Ovary (tissue), 10 donors: ENCODE measurements at regions of chr2 and their contacts with region 1.

Region 1: GRCh38 chr2:162221064-162221463 is 22.2 kb downstream of the FAP start:
- DNase-seq: peak; percentile 21 to 60 (median 46)
- H3K4me3 ChIP-seq: no peak overlapping the region
- H3K27ac ChIP-seq: no peak overlapping the region
- H3K4me1 ChIP-seq: no peaks in the 10 kb centered on the region
- H3K27me3 ChIP-seq: no peaks in the 10 kb centered on the region
- CTCF ChIP-seq: peak in 2 of 3 donors; percentile 37 to 50
- EP300 ChIP-seq: no peak
- POLR2A ChIP-seq: no peak

Region 2: DNA sequence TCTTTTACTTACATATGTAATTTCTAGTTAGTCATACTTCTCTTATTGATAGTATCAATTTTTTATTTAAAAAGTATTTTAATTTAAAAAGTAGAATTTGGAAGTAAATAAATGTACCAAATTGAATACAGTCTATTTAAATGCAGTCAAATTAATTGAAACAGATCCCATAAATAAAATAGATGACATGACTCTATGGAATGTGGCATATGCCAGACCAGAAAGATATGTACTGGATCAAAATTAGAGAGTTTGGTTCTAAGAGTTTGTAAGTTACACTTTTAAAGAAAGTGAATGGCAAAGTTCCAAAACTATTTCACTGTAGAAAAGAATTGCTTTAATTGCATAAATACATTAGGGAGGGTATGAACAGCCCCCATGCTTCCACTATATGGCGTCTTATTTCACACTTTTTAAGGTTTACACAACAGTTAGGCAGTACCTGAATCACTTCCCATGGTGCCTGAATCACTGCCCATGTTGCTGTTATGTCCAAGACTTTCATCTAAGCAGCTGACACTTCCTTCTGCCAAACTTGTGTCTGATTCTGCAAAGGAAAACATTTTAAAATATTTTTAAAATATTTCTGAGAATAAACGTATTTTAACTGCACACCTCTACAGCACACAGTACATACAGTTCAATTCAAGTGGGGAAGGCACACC is 72.2 kb after region 1 on chr2:
- intact Hi-C with region 1: loop called in 1 of 4 experiments (anchors 5 kb)
- DNase-seq: no peak
- H3K4me3 ChIP-seq: no peak overlapping the region
- H3K27ac ChIP-seq: no peak overlapping the region
- H3K4me1 ChIP-seq: no peaks in the 10 kb centered on the region
- H3K27me3 ChIP-seq: no peaks in the 10 kb centered on the region
- CTCF ChIP-seq: no peak
- EP300 ChIP-seq: no peak
- POLR2A ChIP-seq: no peak

Region 3: DNA sequence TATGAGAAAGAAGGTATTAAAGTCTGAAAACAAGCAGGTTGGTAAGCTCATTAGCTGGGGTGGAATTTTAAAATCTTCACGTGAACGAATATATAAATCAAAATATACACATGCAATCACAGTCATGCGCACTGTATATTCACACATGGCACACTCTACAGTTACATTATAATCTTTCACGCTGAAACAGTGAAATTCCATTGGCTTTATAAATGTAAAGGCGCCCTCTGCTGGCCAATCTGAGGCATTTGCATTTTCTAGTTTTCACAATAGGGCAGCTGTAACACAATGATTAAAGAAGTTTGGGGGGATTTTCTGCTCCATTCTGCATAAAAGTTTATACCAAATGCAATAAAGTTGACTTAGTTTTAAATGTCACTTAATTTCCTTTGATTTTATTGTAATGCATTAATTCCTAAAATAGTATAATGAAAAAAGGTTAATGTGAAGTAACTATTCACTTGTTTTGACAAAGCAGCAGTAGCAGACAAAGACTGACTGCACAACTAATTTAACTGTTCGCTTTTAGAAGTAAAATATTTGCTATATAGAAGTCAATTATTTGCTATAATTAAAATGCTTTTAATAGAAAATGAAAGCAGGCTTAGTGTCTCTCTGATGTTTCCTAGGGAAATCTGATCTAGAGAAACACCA is 80.2 kb after region 1 on chr2:
- intact Hi-C with region 1: loop called in 1 of 4 experiments (anchors 2 kb)
- DNase-seq: peak in 3 of 5 donors; percentile 35 to 53 (median 39)
- H3K4me3 ChIP-seq: no peak overlapping the region
- H3K27ac ChIP-seq: no peak overlapping the region
- H3K4me1 ChIP-seq: no peaks in the 10 kb centered on the region
- H3K27me3 ChIP-seq: no peaks in the 10 kb centered on the region
- CTCF ChIP-seq: peak; percentile 52 to 69 (median 66)
- EP300 ChIP-seq: no peak
- POLR2A ChIP-seq: no peak